KBM-7 (cell line): ENCODE measurements at regions of chr12 and their contacts with region 1.

Region 1: GRCh38 chr12:8890313-8891085 is 23.8 kb upstream of the PHC1 start:
- DNase-seq: peak; percentile 75

Region 2: DNA sequence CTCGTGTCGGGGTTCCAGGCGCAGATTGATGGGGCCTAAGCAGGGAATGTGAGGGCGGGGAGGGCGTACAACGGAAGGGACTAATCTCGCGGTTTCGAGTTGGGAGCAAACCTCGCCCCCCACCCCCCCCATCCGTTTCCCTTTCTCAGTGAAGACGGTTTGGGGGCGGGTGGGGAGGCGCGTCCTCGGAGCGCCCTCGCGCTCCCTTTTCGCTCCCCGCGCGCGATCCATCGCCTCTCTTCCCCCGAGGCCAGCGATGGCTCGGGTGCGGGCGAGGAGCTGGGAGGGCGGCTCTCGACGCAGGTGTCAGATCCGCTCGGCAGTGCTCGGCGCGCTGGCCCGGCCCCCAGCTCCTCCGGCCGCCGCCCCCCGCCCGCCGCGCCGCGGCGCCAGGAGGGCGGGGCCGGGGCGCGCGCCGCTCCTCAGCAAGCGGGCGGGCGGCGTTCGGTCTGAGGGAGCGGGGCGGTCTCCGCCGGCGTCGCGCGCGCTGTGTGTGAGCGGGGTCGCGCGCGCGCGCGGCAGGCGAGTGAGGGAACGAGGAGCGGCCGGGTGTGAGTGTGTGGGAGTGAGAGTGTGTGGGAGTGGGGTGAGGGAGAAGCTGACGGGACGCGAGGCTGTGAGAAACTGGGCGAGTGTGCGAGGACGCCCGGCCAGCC is 192.9 kb before region 1 on chr12 and contains the start of gene RIMKLB:
- in situ Hi-C with region 1: loop called (anchors 25 kb)
- DNase-seq: peak; percentile 84